Gastrocnemius medialis (tissue), 4 donors: ENCODE measurements at regions of chr5 and their contacts with region 1.

Region 1: DNA sequence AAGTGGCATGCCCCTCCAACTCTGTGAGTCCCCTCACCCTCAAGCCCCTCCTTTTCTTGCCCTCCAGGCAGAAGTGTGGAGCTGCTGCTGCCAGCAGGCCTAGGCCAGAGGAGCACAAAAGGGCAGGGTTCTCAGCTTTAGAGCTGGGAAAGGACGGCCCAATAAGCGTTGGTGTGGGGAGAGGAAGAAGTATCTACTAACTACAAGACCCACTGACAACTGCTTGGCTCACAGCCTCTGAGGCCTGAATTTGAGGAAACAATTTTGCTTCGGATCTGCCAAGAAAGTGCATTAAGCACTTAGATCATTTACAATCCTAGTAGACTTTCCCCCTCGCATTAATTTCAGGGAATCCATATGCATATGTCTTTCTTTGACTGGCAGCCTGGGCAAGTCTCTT is 179.4 kb downstream of the SNX18 start:
- DNase-seq: no peak
- ATAC-seq: no peak
- H3K4me3 ChIP-seq: no peak overlapping the region
- H3K27ac ChIP-seq: no peak overlapping the region
- H3K4me1 ChIP-seq: peaks cover 2 to 5% of the 10 kb centered on the region in 2 donors
- H3K27me3 ChIP-seq: no peaks in the 10 kb centered on the region
- CTCF ChIP-seq: no peak
- POLR2A ChIP-seq: no peak

Region 2: GRCh38 chr5:54785729-54786591 is 89.0 kb after region 1 on chr5:
- in situ Hi-C with region 1: loop called in 1 of 4 experiments (anchors 25 kb)
- intact Hi-C with region 1: no loop called
- DNase-seq: peak; percentile 19 to 44
- ATAC-seq: peak in 1 of 2 donors; percentile 27
- H3K4me3 ChIP-seq: no peak overlapping the region
- H3K27ac ChIP-seq: no peak overlapping the region
- H3K4me1 ChIP-seq: no peaks in the 10 kb centered on the region
- H3K27me3 ChIP-seq: no peaks in the 10 kb centered on the region
- CTCF ChIP-seq: no peak
- POLR2A ChIP-seq: no peak